Posterior vena cava (tissue), 2 donors: ENCODE measurements at regions of chr19 and their contacts with region 1.

Region 1: GRCh38 chr19:19488875-19489690 is 26.3 kb downstream of the TSSK6 start:
- DNase-seq: peak; percentile 96

Region 2: GRCh38 chr19:19366612-19367396 is 122.3 kb before region 1 on chr19:
- intact Hi-C with region 1: loop called (anchors 5 kb)
- DNase-seq: no peak

Region 3: GRCh38 chr19:19381007-19381926 is 107.8 kb before region 1 on chr19:
- intact Hi-C with region 1: loop called in 1 of 2 experiments (anchors 5 kb)
- DNase-seq: no peak

Region 4: DNA sequence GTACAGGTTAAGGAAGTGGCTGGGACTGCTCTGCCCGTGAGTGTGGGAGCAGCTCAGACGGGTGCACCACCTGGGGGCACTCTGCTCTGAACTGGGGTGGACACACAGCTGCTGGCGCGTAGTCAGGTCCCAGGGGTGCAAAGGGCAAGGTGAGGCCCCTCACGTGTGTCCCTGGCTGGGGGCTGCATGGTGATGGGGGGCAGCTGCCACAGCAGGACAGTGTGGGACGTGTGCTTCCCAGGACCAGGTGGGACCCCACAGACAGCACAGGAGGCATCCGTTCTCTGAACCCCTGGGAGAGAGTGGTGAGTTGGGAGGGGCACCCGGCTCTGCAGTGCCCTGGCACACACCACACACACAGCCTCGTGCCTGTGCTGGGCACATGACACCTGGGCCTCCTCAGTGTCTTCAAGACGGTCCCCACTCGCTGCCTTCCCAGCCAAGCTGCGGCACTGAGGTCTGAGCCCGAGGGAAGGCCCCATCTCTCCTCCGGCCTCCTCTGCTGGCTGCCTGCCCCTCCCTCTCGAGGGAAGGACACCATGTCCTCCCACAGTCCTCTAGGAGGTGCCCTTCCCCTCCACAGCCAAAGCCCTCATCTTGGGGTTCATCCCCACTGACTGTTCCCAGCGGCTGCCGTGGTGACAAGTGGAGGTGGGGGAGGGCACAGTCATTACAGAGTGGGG is 73.7 kb after region 1 on chr19:
- intact Hi-C with region 1: no loop called
- DNase-seq: no peak